Prostate gland (tissue), 2 donors: ENCODE measurements at regions of chr3 and their contacts with region 1.

Region 1: DNA sequence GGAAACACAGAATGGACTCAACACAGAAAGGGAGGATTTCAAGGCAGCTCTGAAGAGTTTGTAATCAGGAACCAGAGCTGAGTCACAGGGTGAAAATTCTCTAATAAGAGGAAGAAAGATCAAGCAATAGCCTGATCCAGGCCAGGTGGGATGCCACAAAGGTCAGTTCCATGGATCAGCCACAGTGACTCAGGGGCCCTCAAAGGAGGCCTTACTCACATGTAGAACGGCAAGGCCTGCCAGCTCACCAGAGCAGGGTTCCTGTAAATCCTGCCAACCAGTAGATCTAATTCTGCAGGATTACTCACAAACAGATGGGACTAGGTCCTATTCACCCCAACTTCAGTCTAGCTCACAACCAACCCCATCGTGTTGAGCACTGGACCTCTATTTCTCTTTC is 78.3 kb upstream of the PPP2R3A start:
- DNase-seq: no peak
- H3K4me3 ChIP-seq: no peak overlapping the region
- H3K27ac ChIP-seq: no peak overlapping the region
- H3K4me1 ChIP-seq: no peaks in the 10 kb centered on the region
- H3K27me3 ChIP-seq: no peaks in the 10 kb centered on the region
- CTCF ChIP-seq: no peak
- POLR2A ChIP-seq: no peak

Region 2: DNA sequence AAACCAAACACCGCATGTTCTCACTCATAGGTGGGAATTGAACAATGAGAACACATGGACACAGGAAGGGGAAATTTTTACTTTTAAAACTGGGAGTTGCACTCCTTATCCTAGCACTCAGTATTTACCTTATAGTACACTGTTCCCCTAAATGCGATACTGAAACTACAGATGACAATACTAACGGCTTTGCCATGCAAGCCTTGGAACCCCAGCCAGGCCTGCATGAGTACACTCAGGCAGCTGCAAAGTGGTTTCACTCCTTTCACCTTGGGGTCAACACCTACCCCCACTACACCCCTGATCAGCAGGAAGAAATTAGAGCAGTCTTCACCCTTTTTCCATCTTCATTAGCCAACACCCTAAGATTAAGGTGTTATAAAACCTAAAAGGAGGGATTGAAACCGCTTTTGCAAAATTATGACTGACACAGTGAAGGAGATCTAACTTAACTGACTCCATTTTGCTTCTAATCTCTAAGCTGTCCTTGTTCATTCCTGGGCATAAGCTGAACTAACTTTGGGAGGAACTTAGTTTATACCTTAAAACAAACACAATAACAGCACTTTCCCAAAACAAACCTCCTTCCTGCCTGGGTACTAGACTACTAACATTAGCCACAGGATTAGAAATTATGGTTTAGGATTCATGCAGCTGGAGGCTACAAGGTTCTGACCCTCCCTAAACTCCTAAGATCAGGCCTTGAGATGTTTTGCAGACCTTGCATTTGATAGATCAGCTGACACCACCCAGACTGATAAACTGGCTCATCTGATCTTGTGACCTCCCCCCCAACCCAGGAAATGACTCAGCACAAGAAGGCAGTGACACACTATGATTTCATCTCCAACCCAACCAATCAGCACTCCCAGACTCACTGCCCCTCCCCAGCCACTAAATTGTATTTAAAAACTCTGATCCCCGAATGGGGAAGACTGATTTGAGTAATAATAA is 373.8 kb before region 1 on chr3:
- intact Hi-C with region 1: loop called (anchors 10 kb)
- DNase-seq: no peak
- H3K4me3 ChIP-seq: no peak overlapping the region
- H3K27ac ChIP-seq: no peak overlapping the region
- H3K4me1 ChIP-seq: no peaks in the 10 kb centered on the region
- H3K27me3 ChIP-seq: no peaks in the 10 kb centered on the region
- CTCF ChIP-seq: no peak
- POLR2A ChIP-seq: no peak